CD4-positive, alpha-beta memory T cell (primary cell): ENCODE measurements at regions of chr10 and their contacts with region 1.

Region 1: GRCh38 chr10:17737027-17737965 is 14.7 kb upstream of the TMEM236 start:
- DNase-seq: peak in 4 of 5 donors; percentile 7 to 30 (median 22)
- H3K4me3 ChIP-seq: no peak overlapping the region
- H3K4me3 Mint-ChIP-seq: no peak overlapping the region
- H3K27ac ChIP-seq: no peak overlapping the region
- H3K27ac Mint-ChIP-seq: no peak overlapping the region
- H3K4me1 ChIP-seq: no peaks in the 10 kb centered on the region
- H3K4me1 Mint-ChIP-seq: peaks cover 0 to 5% (median 3%) of the 10 kb centered on the region in 4 donors
- H3K27me3 ChIP-seq: no peaks in the 10 kb centered on the region
- H3K27me3 Mint-ChIP-seq: no peaks in the 10 kb centered on the region

Region 2: GRCh38 chr10:17768957-17769356 is 31.7 kb after region 1 on chr10:
- CTCF ChIA-PET with region 1: no interaction called
- POLR2A ChIA-PET with region 1: no interaction called
- intact Hi-C with region 1: loop called (anchors 1 kb)
- DNase-seq: no peak
- H3K4me3 ChIP-seq: no peak overlapping the region
- H3K4me3 Mint-ChIP-seq: peak overlapping the region in 1 of 8 donors; percentile 0
- H3K27ac ChIP-seq: no peak overlapping the region
- H3K27ac Mint-ChIP-seq: no peak overlapping the region
- H3K4me1 ChIP-seq: no peaks in the 10 kb centered on the region
- H3K4me1 Mint-ChIP-seq: no peaks in the 10 kb centered on the region
- H3K27me3 ChIP-seq: no peaks in the 10 kb centered on the region
- H3K27me3 Mint-ChIP-seq: peaks cover 4 to 10% of the 10 kb centered on the region in 2 donors